Activated T-helper 2 cell treated with anti-CD3 and anti-CD28 coated beads, Interferon-gamma antibody, Interleukin-2, Interleukin-4, amounts not matched to agents 10 μg/mL and 5 μg/mL and 100 μg/mL, durations not matched to agents 14 hours and 24 hours and 36 hours (primary cell): ENCODE measurements at regions of chr17 and their contacts with region 1.

Region 1: DNA sequence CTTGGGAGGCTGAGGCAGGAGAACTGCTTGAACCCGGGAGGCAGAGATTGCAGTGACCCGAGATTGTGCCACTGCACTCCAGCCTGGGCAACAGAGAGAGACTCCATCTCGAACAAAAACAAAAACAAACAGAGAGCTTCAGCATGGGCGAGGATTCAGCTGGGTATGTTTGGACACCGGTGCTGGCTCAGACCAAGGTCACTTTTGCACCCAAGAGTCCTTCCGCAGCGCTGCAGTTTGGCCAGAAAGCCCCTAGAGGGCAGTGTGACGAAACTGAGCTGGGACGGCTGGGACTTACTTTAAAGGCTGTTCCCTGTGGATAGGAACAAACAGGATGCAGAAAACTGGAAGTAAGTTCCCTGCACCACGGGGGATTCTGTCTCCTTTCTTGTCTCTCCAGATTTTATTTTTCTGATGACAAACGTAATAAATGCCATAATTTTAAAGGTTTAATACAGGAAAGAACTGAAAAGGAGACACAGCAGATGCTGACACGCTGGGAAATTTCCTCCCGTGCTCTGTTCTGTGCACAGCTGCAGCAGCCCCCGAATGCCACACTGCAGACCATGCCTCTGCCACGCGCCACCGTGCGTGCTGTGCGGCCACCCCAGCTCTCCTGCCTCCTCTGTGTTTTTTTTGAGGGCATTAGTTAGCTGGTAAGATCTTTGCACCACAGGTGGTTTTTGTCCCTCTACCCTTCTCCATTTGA is 25.2 kb upstream of the USP36 start:
- DNase-seq: peak; percentile 54
- H3K4me3 Mint-ChIP-seq: no peak overlapping the region
- H3K27ac Mint-ChIP-seq: no peak overlapping the region
- H3K4me1 Mint-ChIP-seq: no peaks in the 10 kb centered on the region
- H3K27me3 Mint-ChIP-seq: peaks cover 6% of the 10 kb centered on the region

Region 2: DNA sequence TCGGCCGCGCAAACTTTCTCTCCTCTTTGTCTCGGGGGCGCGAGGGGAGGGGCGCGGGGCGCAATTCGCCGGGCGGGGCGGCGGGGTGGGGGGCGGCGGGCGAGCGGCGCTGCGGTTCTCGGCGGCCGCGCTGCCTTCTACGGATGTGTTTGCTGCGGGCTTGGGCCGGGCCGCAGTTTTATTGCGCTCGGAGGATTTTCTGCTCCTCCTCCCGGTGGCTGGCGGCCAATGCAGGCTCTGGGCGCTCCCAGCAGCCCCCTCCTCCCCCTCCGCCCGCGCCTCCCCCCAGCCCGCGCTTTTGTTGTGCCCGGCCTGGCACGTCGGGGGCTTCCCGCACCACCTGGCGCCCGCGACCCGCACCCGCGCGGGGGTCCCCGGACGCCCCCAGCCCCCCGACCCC is 59.4 kb after region 1 on chr17 and contains the start of gene TIMP2:
- intact Hi-C with region 1: loop called (anchors 10 kb)
- DNase-seq: peak; percentile 55
- H3K4me3 Mint-ChIP-seq: no peak within 1 kb of the TSS
- H3K27ac Mint-ChIP-seq: no peak within 1 kb of the TSS
- H3K4me1 Mint-ChIP-seq: peaks cover 11% of the 10 kb centered on the region
- H3K27me3 Mint-ChIP-seq: peaks cover 32% of the 10 kb centered on the region
- total RNA-seq, gene TIMP2: 0.71 and 0.84 TPM in 2 replicates

Region 3: GRCh38 chr17:78972710-78973595 is 107.1 kb after region 1 on chr17:
- intact Hi-C with region 1: loop called (anchors 2 kb)
- DNase-seq: no peak
- H3K4me3 Mint-ChIP-seq: no peak overlapping the region
- H3K27ac Mint-ChIP-seq: no peak overlapping the region
- H3K4me1 Mint-ChIP-seq: peaks cover 10% of the 10 kb centered on the region
- H3K27me3 Mint-ChIP-seq: no peaks in the 10 kb centered on the region